PC-9 (cell line): ENCODE measurements at regions of chr4 and their contacts with region 1.

Region 1: GRCh38 chr4:140637836-140638235 is 69.1 kb upstream of the UCP1 start:
- DNase-seq: no peak
- H3K4me3 ChIP-seq: no peak overlapping the region
- H3K27ac ChIP-seq: no peak overlapping the region
- H3K4me1 ChIP-seq: peaks cover 23% of the 10 kb centered on the region
- H3K27me3 ChIP-seq: no peaks in the 10 kb centered on the region
- CTCF ChIP-seq: peak; percentile 63

Region 2: GRCh38 chr4:139050446-139050845 is 1587.4 kb before region 1 on chr4:
- CTCF ChIA-PET with region 1: no interaction called
- POLR2A ChIA-PET with region 1: no interaction called
- intact Hi-C with region 1: no loop called
- DNase-seq: no peak
- H3K4me3 ChIP-seq: no peak overlapping the region
- H3K27ac ChIP-seq: no peak overlapping the region
- H3K4me1 ChIP-seq: peaks cover 12% of the 10 kb centered on the region
- H3K27me3 ChIP-seq: no peaks in the 10 kb centered on the region
- CTCF ChIP-seq: no peak

Region 3: GRCh38 chr4:140367738-140368137 is 270.1 kb before region 1 on chr4:
- CTCF ChIA-PET with region 1: interaction called, 3 read pairs
- POLR2A ChIA-PET with region 1: no interaction called
- intact Hi-C with region 1: loop called (anchors 2 kb)
- DNase-seq: peak; percentile 59 to 76
- H3K4me3 ChIP-seq: no peak overlapping the region
- H3K27ac ChIP-seq: peak overlapping the region; percentile 17
- H3K4me1 ChIP-seq: peaks cover 26% of the 10 kb centered on the region
- H3K27me3 ChIP-seq: no peaks in the 10 kb centered on the region
- CTCF ChIP-seq: no peak

Region 4: DNA sequence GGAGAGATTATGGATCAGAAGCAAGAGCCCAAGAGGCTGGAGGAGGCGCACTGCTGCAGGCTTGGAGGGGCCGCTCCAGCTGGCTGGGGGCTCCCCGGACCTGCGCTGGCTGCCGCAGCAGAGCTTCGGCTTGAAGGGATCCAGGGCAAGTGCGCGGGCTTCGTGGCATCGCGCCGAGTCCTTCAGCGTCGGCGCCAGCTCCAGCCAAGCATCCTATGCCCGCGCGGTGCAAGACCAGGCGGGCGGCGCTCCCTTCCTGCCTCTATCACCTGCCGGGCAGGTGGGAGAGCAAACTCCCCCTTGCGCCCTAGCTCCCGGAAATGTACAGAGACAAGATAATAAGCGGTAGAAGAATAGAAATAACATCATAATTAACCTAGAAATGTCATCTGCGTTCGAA is 58.6 kb before region 1 on chr4:
- CTCF ChIA-PET with region 1: no interaction called
- POLR2A ChIA-PET with region 1: no interaction called
- intact Hi-C with region 1: no loop called
- DNase-seq: no peak
- H3K4me3 ChIP-seq: no peak overlapping the region
- H3K27ac ChIP-seq: no peak overlapping the region
- H3K4me1 ChIP-seq: no peaks in the 10 kb centered on the region
- H3K27me3 ChIP-seq: no peaks in the 10 kb centered on the region
- CTCF ChIP-seq: no peak

Region 5: DNA sequence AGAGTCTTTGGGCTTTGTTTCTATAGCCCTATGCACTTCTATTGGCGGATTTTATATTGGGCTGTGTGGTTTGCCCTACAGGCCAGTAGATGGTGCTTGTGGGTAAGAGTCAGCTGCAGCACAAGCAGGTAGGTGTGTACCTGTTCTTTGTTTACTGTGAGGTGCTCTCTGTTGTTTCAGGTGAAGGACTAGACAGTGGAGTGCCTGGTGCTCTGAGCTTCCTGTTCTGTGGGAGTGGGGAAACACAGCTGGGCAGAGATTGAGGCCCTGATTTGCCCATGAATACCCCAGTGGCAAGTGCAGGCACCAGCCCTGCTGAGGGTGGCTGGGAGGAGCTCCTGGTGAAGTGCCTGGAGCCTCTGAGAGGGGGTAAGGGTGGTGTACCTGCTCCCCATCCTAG is 42.8 kb before region 1 on chr4:
- CTCF ChIA-PET with region 1: no interaction called
- POLR2A ChIA-PET with region 1: interaction called, 4 read pairs
- intact Hi-C with region 1: loop called (anchors 5 kb)
- DNase-seq: peak; percentile 40 to 46
- H3K4me3 ChIP-seq: no peak overlapping the region
- H3K27ac ChIP-seq: no peak overlapping the region
- H3K4me1 ChIP-seq: no peaks in the 10 kb centered on the region
- H3K27me3 ChIP-seq: no peaks in the 10 kb centered on the region
- CTCF ChIP-seq: peak; percentile 67